Vagina (tissue), 2 donors: ENCODE measurements at regions of chr19 and their contacts with region 1.

Region 1: GRCh38 chr19:35013031-35013819 is 13.1 kb downstream of the GRAMD1A start:
- DNase-seq: no peak
- H3K4me3 ChIP-seq: no peak overlapping the region
- H3K27ac ChIP-seq: peak overlapping the region; percentile 21
- H3K4me1 ChIP-seq: peaks cover 22% of the 10 kb centered on the region
- H3K27me3 ChIP-seq: no peaks in the 10 kb centered on the region
- CTCF ChIP-seq: peak; percentile 79 to 96 (median 91)
- POLR2A ChIP-seq: no peak

Region 2: GRCh38 chr19:34972163-34972705 is 41.0 kb before region 1 on chr19:
- intact Hi-C with region 1: loop called (anchors 2 kb)
- DNase-seq: no peak
- H3K4me3 ChIP-seq: no peak overlapping the region
- H3K27ac ChIP-seq: no peak overlapping the region
- H3K4me1 ChIP-seq: no peaks in the 10 kb centered on the region
- H3K27me3 ChIP-seq: no peaks in the 10 kb centered on the region
- CTCF ChIP-seq: no peak
- POLR2A ChIP-seq: no peak

Region 3: GRCh38 chr19:35090506-35091237 is 77.4 kb after region 1 on chr19:
- intact Hi-C with region 1: loop called (anchors 2 kb)
- DNase-seq: no peak
- H3K4me3 ChIP-seq: peak overlapping the region in 1 of 2 donors; percentile 7
- H3K27ac ChIP-seq: peak overlapping the region; percentile 2
- H3K4me1 ChIP-seq: peaks cover 13% of the 10 kb centered on the region
- H3K27me3 ChIP-seq: no peaks in the 10 kb centered on the region
- CTCF ChIP-seq: peak; percentile 34 to 61 (median 46)
- POLR2A ChIP-seq: no peak

Region 4: DNA sequence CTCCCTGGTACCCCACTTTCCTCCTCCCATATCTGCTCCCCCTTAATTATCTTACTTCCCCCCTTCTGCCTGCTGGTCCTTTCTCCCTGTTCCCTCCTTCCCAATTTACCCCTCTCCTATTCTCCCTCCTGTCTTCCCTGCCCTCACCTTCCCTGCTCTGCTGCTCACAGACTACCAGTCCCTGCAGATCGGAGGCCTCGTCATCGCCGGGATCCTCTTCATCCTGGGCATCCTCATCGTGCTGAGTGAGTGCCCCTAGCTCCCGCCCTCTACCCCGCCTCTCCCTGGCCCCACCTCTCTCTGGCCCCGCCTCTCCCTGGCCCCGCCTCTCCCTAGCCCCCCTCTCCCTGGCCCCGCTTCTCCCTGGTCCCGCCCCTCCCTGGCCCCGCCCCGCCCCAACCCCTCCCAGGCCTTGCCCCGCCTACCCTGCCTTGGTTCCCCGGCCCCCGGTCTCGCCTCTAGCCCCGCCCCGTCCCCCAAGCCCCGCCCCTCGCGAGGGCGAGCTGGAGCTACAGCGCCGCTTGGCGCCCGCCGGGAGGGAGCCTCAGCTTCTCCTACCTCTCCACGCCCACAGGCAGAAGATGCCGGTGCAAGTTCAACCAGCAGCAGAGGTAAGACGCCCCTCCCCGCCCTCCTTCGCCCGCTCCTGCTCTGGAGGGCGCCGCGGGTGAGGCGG is 127.9 kb after region 1 on chr19:
- intact Hi-C with region 1: no loop called
- DNase-seq: peak in 1 of 2 donors; percentile 97
- H3K4me3 ChIP-seq: peak overlapping the region; percentile 49 to 59
- H3K27ac ChIP-seq: peak overlapping the region; percentile 96
- H3K4me1 ChIP-seq: peaks cover 65% of the 10 kb centered on the region
- H3K27me3 ChIP-seq: no peaks in the 10 kb centered on the region
- CTCF ChIP-seq: peak in 1 of 3 experiments; percentile 55
- POLR2A ChIP-seq: peak in 1 of 2 donors; percentile 91

Region 5: GRCh38 chr19:35352448-35353304 is 339.5 kb after region 1 on chr19:
- intact Hi-C with region 1: no loop called
- DNase-seq: no peak
- H3K4me3 ChIP-seq: no peak overlapping the region
- H3K27ac ChIP-seq: no peak overlapping the region
- H3K4me1 ChIP-seq: no peaks in the 10 kb centered on the region
- H3K27me3 ChIP-seq: no peaks in the 10 kb centered on the region
- CTCF ChIP-seq: peak; percentile 35 to 69 (median 57)
- POLR2A ChIP-seq: no peak